ENCODE measurements at regions of chr17 and their contacts with region 1.

Region 1: DNA sequence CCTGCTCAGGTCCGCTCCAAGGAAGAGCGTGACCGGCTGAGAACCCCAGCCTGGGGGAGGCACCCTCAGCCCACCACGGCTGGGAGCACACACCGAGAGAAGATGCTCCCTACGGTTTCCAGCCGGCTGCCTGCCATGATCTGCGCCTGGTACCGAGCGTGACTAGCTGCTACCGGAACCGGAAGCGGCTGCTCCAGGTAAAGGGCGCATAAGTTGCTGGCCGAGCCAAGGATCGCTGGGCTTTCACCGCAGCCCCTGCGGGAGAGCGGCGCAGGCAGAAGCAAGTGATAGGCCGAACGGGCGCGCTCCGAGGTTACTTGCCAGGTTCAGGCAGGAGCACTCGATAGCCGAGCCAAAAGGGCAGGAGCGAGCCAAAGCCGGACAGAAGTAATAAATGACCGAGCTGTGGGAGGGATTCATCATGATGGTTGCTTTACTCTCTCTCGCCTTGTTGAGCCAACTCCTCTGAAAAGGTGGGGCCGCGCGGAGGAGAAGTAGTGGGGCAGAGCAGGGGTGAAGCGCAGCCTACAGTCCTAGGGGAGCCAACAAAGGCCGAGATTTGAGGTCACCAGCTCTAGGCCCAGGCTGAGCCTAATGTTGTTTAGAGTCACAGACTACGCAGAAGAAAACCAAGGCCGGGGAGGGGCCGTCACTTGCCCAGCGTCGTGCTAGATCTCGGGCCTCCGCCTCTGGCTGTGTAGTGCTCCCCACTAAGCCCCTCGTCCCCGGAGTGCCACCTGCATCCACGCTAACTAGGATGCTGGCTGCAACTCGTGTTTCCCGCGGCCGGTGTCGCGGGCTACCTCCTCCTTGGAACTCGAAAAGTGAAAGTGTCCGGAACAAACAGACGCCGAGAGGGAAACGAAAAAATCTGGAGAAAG is at the start of gene MRPS23:
- DNase-seq: peak; percentile 85 to 98 (median 94)
- ATAC-seq: peak; percentile 99
- H3K4me3 ChIP-seq: peak within 1 kb of the TSS; percentile 88
- H3K4me3 Mint-ChIP-seq: peak within 1 kb of the TSS; percentile 92 to 100 (median 99)
- H3K27ac ChIP-seq: peak within 1 kb of the TSS; percentile 86
- H3K27ac Mint-ChIP-seq: peak within 1 kb of the TSS; percentile 97 to 100 (median 100)
- H3K4me1 ChIP-seq: peaks cover 20 to 27% of the 10 kb centered on the region in 2 donors
- H3K4me1 Mint-ChIP-seq: peaks cover 24 to 61% (median 49%) of the 10 kb centered on the region in 7 donors
- H3K27me3 ChIP-seq: no peaks in the 10 kb centered on the region
- H3K27me3 Mint-ChIP-seq: no peaks in the 10 kb centered on the region
- total RNA-seq, gene MRPS23: 13.0 to 40.5 (median 24.6) TPM

Region 2: DNA sequence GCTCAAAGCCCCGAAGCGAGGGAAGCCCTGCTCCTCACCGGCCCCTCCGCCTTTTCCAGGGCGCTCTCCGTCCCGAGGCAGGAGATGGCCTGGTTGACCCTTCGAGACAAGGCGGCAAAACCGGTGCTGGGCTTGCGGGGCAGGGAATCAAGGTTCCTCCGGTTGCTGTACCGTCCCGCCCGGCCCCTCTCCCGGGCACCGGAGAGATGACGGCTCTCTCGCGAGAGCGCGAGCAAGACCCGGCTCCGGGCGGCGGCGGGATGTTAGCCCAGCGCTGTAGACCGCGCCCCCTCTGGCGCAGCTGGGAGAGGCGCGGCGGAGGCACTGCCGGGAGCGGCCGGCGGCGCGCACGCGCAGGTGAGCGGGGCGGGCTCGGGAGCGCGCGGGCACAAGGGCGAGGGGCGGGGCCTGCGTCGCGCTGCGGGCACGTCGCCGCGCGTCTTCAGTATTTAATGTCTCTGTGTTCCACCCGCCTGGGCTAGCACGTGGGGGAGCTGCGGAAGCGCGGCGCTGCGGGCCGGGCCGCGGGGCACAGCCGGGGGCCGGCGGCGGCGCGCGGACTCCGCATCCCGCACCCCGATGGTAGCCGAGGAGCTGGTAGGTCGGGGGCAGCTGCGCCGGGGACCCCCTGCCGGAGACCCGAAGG is 765.2 kb before region 1 on chr17 and contains the start of gene AKAP1:
- CTCF ChIA-PET with region 1: no interaction called
- POLR2A ChIA-PET with region 1: interaction called, 6 read pairs
- intact Hi-C with region 1: loop called (anchors 1 kb)
- DNase-seq: peak; percentile 91 to 98 (median 97)
- ATAC-seq: peak; percentile 95
- H3K4me3 ChIP-seq: peak within 1 kb of the TSS; percentile 96
- H3K4me3 Mint-ChIP-seq: peak within 1 kb of the TSS; percentile 89 to 95 (median 92)
- H3K27ac ChIP-seq: peak within 1 kb of the TSS; percentile 91
- H3K27ac Mint-ChIP-seq: peak within 1 kb of the TSS; percentile 86 to 95 (median 93)
- H3K4me1 ChIP-seq: peaks cover 9 to 12% of the 10 kb centered on the region in 2 donors
- H3K4me1 Mint-ChIP-seq: peaks cover 27 to 43% (median 34%) of the 10 kb centered on the region in 7 donors
- H3K27me3 ChIP-seq: no peaks in the 10 kb centered on the region
- H3K27me3 Mint-ChIP-seq: peaks cover 0 to 12% (median 0%) of the 10 kb centered on the region in 5 donors
- total RNA-seq, gene AKAP1: 22.2 to 35.8 (median 34.3) TPM

Region 3: GRCh38 chr17:57505841-57506773 is 344.0 kb before region 1 on chr17:
- CTCF ChIA-PET with region 1: no interaction called
- POLR2A ChIA-PET with region 1: no interaction called
- intact Hi-C with region 1: no loop called
- DNase-seq: no peak
- ATAC-seq: no peak
- H3K4me3 ChIP-seq: no peak overlapping the region
- H3K4me3 Mint-ChIP-seq: no peak overlapping the region
- H3K27ac ChIP-seq: no peak overlapping the region
- H3K27ac Mint-ChIP-seq: no peak overlapping the region
- H3K4me1 ChIP-seq: no peaks in the 10 kb centered on the region
- H3K4me1 Mint-ChIP-seq: peaks cover 2 to 34% (median 19%) of the 10 kb centered on the region in 7 donors
- H3K27me3 ChIP-seq: no peaks in the 10 kb centered on the region
- H3K27me3 Mint-ChIP-seq: no peaks in the 10 kb centered on the region

Region 4: DNA sequence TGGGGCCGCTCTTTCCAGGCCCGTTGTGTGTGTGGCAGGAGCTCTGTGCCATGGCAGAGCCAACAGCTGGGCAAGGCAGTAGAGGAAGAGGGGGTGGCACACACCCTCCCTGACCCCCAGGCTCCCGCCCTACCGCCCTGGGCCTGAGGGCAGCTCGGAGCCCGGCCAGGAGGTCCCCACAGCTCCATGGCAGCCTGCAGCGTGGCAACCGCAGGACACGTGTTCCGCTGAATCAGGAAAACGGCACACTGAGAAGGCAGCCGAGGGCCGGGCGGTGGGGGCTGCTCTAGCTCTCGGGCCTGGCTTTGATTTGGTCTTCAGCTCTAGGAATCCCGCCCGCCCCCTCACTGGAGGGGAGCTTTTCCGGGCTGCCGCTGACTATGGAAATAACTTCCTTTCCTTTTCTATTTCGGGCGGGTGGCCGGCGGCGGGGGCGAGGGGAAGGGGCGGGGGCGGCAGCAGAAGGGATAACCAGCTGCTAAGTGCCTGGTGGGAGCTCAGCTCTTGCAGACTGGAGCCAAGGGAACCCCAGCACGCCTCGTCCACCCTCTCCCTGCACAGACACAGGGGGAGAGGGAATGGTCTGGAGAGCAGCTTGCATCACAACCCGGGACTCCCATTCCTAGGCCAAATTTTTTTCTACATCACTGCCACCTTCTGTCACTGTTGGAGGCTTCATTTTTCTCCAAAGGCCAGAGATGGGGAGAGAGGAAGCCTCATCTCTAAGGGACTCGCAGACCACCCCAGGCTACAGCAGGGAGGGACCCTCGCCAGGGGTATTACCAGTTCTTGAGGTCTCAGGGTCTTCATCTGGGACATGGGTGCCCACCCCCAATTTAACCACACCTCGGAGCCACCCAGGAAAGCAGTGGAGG is 24.6 kb after region 1 on chr17:
- CTCF ChIA-PET with region 1: no interaction called
- POLR2A ChIA-PET with region 1: no interaction called
- intact Hi-C with region 1: loop called in 1 of 2 experiments (anchors 1 kb)
- DNase-seq: peak in 2 of 9 donors; percentile 13 to 20
- ATAC-seq: peak; percentile 74
- H3K4me3 ChIP-seq: no peak overlapping the region
- H3K4me3 Mint-ChIP-seq: peak overlapping the region in 9 of 10 donors; percentile 30 to 81 (median 65)
- H3K27ac ChIP-seq: no peak overlapping the region
- H3K27ac Mint-ChIP-seq: no peak overlapping the region
- H3K4me1 ChIP-seq: peaks cover 0 to 19% of the 10 kb centered on the region in 2 donors
- H3K4me1 Mint-ChIP-seq: peaks cover 6 to 27% (median 25%) of the 10 kb centered on the region in 7 donors
- H3K27me3 ChIP-seq: no peaks in the 10 kb centered on the region
- H3K27me3 Mint-ChIP-seq: peaks cover 5 to 37% (median 14%) of the 10 kb centered on the region in 5 donors

Region 5: DNA sequence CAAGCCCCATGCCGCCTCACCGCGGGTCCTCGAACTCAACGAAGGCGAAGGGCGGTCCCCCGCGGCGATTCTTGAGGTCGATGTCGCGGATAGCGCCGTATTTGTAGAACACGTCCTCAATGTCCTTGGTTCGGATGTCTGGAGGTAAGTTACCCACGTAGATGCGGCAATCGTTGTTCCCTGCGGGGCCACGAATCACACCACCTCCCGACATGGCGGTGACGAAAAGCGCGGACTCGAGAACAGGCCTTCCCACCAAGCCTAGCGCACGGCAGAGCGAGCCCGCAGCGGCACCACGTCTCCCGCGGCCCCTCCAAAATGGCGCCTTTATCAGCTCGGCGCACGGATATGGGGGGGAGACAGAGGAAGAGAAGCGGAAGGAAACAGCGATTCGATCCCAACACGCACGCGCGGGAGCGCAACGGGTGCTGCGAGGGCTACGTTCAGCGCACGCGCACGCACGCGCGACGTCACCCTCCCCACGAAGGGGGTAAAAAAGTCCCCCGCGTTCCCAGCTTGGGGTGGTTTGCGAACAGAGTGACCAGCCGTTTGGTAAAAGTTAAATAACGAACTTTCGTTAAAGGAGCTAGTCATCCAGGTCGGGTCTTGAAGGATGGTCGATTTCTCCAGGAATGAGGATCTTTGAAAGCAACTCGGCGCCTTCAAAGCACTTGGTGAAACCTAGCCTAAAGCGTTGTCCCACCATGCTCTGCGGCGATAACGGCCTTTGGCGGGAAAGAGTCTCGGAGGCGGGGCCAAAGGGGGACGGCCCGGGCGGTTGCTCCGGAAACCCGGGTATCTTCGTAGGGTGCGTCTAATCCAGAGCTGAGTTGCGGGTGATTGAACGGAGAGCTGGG is 157.0 kb after region 1 on chr17 and contains the start of gene SRSF1:
- CTCF ChIA-PET with region 1: interaction called, 3 read pairs
- POLR2A ChIA-PET with region 1: interaction called, 40 read pairs
- intact Hi-C with region 1: loop called (anchors 1 kb)
- DNase-seq: peak; percentile 95 to 99 (median 98)
- ATAC-seq: peak; percentile 92
- H3K4me3 ChIP-seq: peak within 1 kb of the TSS; percentile 99
- H3K4me3 Mint-ChIP-seq: peak within 1 kb of the TSS; percentile 96 to 100 (median 99)
- H3K27ac ChIP-seq: peak within 1 kb of the TSS; percentile 93
- H3K27ac Mint-ChIP-seq: peak within 1 kb of the TSS; percentile 99 to 100 (median 99)
- H3K4me1 ChIP-seq: peaks cover 31 to 32% of the 10 kb centered on the region in 2 donors
- H3K4me1 Mint-ChIP-seq: peaks cover 33 to 60% (median 54%) of the 10 kb centered on the region in 7 donors
- H3K27me3 ChIP-seq: no peaks in the 10 kb centered on the region
- H3K27me3 Mint-ChIP-seq: peaks cover 0 to 3% (median 0%) of the 10 kb centered on the region in 5 donors
- total RNA-seq, gene SRSF1: 115 to 362 (median 249) TPM

Region 6: GRCh38 chr17:58219001-58219788 is 369.1 kb after region 1 on chr17 and contains the start of gene MKS1:
- CTCF ChIA-PET with region 1: no interaction called
- POLR2A ChIA-PET with region 1: interaction called, 7 read pairs
- intact Hi-C with region 1: loop called in 1 of 2 experiments (anchors 1 kb)
- DNase-seq: peak; percentile 90 to 96 (median 94)
- ATAC-seq: peak; percentile 98
- H3K4me3 ChIP-seq: peak within 1 kb of the TSS; percentile 68
- H3K4me3 Mint-ChIP-seq: peak within 1 kb of the TSS; percentile 86 to 96 (median 94)
- H3K27ac ChIP-seq: peak within 1 kb of the TSS; percentile 77
- H3K27ac Mint-ChIP-seq: peak within 1 kb of the TSS; percentile 92 to 98 (median 97)
- H3K4me1 ChIP-seq: peaks cover 8 to 9% of the 10 kb centered on the region in 2 donors
- H3K4me1 Mint-ChIP-seq: peaks cover 7 to 33% (median 23%) of the 10 kb centered on the region in 7 donors
- H3K27me3 ChIP-seq: no peaks in the 10 kb centered on the region
- H3K27me3 Mint-ChIP-seq: peaks cover 0 to 18% (median 0%) of the 10 kb centered on the region in 5 donors
- total RNA-seq, gene MKS1: 10.0 to 29.1 (median 19.7) TPM

Region 7: DNA sequence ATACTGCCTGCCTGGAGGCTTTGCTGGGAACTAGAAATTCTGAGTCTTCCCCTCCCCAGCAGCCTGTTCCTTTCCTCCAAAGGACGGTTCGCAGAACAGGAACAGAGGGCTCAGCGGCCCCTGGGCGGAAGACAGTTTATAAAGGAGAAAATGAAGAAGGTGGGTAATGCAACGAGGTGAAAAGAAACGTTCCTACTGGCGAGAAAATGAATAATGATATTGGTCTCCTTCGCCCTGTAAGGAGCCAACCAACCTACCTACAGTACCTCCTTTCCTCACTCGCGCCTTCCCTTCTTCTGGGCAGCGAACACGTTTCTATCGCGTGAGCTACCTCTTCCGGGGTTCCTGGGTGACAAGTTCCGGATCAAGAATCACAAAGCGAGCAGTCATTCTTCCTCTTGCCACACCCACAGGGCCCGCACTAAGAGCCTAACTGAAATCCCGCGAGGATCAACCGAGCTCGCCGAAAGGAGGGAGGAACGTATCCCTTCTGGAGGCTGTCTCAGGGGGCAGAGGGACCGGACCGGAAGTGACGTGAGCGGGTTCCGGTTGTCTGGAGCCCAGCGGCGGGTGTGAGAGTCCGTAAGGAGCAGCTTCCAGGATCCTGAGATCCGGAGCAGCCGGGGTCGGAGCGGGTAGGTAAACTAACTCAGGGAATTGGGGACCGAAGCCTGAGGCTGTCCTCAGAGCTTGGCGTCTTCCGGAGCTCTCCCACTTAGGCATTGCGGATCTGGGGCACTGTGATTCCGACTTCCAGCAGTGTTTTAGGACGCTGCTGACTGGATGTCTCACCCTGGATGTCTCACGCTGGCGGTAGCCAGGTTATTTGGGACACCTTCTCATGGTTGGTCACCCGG is 1857.2 kb after region 1 on chr17 and contains the starts of genes PTRH2 and VMP1:
- CTCF ChIA-PET with region 1: no interaction called
- POLR2A ChIA-PET with region 1: no interaction called
- intact Hi-C with region 1: loop called in 1 of 2 experiments (anchors 5 kb)
- DNase-seq: peak; percentile 72 to 94 (median 83)
- ATAC-seq: peak; percentile 96
- H3K4me3 ChIP-seq: peak within 1 kb of the TSS; percentile 90
- H3K4me3 Mint-ChIP-seq: peak within 1 kb of the TSS; percentile 97 to 100 (median 99)
- H3K27ac ChIP-seq: peak within 1 kb of the TSS; percentile 90
- H3K27ac Mint-ChIP-seq: peak within 1 kb of the TSS; percentile 96 to 100 (median 99)
- H3K4me1 ChIP-seq: peaks cover 26 to 28% of the 10 kb centered on the region in 2 donors
- H3K4me1 Mint-ChIP-seq: peaks cover 39 to 86% (median 68%) of the 10 kb centered on the region in 7 donors
- H3K27me3 ChIP-seq: no peaks in the 10 kb centered on the region
- H3K27me3 Mint-ChIP-seq: no peaks in the 10 kb centered on the region
- total RNA-seq, gene PTRH2: 6.1 to 24.1 (median 15.0) TPM
- total RNA-seq, gene VMP1: 70.3 to 370 (median 82.5) TPM

Measured in naive thymus-derived CD4-positive, alpha-beta T cell (primary cell).